Uterus (tissue), 4 donors: ENCODE measurements at regions of chr2 and their contacts with region 1.

Region 1: GRCh38 chr2:64052468-64053241 is 33.4 kb upstream of the VPS54 start:
- DNase-seq: no peak
- H3K4me3 ChIP-seq: no peak overlapping the region
- H3K27ac ChIP-seq: peak overlapping the region; percentile 13 to 46
- H3K4me1 ChIP-seq: no peaks in the 10 kb centered on the region
- H3K27me3 ChIP-seq: no peaks in the 10 kb centered on the region
- CTCF ChIP-seq: no peak
- POLR2A ChIP-seq: no peak

Region 2: DNA sequence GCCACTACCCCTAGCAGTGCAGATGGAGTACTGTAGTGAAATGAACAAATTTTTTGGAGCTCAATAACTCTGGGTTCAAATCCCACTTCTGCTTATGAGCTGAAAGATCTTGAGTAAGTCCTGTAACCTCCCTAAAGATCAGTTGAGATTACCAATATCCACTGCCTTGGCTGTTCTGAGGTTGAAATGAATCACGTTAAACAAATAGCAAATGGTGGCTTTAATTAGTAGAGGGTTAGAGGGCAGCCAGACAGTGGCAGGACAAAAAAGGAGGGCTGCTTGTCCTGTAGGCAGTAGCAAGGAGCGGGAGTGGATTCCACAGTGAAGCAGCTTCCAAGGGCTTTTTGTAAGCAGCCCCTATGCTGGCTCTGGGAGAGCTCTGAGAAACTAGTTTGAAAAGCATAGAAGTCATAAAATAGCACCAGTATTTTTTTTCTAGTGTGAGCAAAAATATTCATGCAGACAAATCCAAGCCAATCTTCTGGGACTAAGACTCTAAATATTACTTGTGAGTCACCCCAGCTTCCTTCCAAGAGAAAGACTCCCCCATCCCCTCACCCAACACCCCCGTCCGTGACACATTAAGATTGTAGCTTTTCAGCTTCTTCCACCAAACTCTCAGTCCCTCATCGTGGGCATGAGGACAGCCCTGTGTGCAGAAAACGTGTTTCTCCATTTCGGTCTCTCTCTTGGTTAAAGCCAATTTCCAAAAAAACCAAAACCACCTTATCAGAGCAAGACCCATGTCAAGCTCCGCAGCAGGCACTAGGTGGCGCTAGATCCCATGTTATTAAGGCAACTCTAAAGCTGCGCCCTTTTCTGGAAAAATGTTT is 277.8 kb after region 1 on chr2:
- intact Hi-C with region 1: loop called (anchors 10 kb)
- DNase-seq: peak; percentile 84 to 89
- H3K4me3 ChIP-seq: no peak overlapping the region
- H3K27ac ChIP-seq: peak overlapping the region; percentile 76 to 91
- H3K4me1 ChIP-seq: peaks cover 0 to 6% of the 10 kb centered on the region in 2 donors
- H3K27me3 ChIP-seq: no peaks in the 10 kb centered on the region
- CTCF ChIP-seq: peak; percentile 91 to 94 (median 93)
- POLR2A ChIP-seq: no peak

Region 3: DNA sequence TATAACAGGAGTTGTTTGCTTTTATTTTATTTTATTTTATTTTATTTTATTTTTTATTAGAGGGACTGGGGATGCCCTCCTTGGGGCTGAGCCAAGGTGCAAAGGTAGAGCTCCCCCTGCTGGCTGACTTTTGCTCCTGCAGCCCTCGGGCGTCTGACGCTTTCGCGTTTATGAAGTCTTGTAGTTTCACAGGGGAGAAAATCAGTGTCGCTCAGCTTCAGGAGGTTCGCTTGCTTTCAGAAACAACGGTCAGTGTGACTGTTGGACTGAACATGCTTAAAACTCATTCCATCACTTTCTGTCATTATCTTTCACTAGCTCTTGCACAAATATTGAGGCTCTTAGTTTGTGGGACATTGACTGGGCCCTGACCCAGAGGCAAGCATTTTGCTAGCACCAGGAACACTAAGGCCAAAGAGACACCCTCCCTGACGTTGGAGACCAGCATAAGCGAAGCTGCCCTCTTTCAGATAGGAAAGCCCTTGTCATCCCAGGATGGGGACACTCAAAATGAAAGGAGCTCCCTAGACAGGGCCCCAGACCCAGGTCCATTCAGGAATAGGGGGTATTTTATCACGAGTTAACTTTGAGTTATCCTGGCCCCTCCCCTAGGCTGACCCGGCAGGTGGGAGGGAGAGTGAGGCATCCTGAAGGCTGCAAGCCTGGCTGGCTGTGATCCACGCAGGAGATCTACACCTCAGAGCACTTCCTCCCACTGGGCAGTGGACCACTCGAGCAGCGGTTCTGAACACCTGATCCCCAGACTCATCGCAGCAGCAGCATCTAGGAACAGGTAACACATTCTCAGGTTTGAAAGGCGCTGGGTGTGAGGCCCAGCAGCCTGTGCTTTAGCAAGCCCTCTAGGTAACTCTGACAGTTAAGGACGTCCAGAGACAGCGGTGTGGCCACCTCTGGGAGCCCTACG is 435.7 kb after region 1 on chr2:
- intact Hi-C with region 1: loop called (anchors 10 kb)
- DNase-seq: peak; percentile 61 to 72
- H3K4me3 ChIP-seq: no peak overlapping the region
- H3K27ac ChIP-seq: no peak overlapping the region
- H3K4me1 ChIP-seq: no peaks in the 10 kb centered on the region
- H3K27me3 ChIP-seq: no peaks in the 10 kb centered on the region
- CTCF ChIP-seq: peak; percentile 77 to 96 (median 86)
- POLR2A ChIP-seq: no peak